Heart right ventricle (tissue), 16 donors: ENCODE measurements at regions of chr17 and their contacts with region 1.

Region 1: DNA sequence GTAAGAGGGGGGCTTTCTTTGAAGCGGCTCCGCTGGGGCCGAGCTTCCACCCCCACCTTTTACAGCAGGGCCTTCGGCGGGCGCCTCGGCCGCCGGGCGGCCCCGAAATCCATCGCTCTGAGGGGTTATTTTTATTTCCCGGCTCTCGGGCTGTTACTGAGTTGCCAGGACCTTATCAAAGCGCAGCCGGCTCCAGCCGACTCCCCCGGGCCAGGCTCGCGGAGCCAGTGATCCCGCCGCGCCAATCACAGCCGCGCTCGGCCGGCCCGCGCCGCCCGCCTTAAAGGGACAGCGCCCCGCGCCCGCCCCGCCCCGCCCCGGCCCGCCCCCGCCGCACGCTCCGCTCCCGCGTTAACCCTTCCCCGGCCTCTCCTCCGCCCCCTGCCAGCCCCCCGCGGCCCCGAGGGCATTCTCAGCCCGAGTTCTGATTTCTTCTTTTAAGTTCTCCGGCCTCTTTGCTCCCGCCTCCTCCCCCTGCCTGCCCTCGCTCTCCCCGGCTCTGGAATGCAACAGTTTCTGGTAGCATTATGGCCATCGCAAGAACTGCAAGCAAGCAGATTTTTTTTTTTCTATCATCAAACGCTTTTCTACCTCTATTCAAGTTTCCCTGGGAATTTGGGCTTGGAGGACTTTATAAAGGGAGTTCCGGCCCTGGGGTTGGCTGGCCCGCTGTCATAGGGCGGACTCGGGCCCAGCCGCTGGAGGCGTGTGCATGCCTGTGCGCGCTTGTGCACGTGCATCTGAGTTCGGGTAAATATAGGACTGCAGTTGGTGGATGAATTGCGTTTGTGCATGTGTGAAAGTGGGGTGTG is at the start of gene AXIN2:
- DNase-seq: peak; percentile 91 to 92
- ATAC-seq: peak; percentile 83 to 93 (median 88)
- H3K4me3 ChIP-seq: peak within 1 kb of the TSS; percentile 82 to 97 (median 90)
- H3K27ac ChIP-seq: peak within 1 kb of the TSS; percentile 88 to 95 (median 91)
- H3K4me1 ChIP-seq: peaks cover 4 to 34% (median 21%) of the 10 kb centered on the region in 9 donors
- H3K27me3 ChIP-seq: peaks cover 0 to 48% (median 0%) of the 10 kb centered on the region in 7 donors
- CTCF ChIP-seq: peak in 5 of 9 donors; percentile 9 to 31 (median 16)
- total RNA-seq, gene AXIN2: 5.7 to 19.2 (median 13.7) TPM

Region 2: DNA sequence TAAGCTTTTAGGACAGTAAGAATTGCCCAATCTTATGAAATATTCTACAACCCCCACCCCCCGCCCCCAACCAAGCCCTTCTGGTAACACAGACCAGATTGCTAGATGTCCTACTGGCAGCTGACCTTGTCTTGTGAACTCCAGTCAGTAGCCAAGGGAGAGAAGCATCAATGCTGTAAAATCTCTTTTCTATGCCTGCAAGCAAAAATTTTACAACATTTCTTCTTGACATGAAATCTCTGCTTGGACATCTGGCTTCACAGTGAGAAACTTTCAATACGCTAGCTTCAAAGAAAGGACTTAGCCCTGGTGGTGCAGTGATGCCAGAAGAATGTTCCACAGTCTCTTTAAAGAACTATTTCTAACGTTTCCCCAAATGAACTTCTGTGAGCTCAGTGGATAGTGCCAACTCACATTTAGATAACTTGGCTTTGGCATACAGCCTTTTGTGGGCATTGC is 169.1 kb after region 1 on chr17:
- intact Hi-C with region 1: loop called in 1 of 10 experiments (anchors 10 kb)
- DNase-seq: no peak
- ATAC-seq: peak in 5 of 8 donors; percentile 29 to 64 (median 63)
- H3K4me3 ChIP-seq: no peak overlapping the region
- H3K27ac ChIP-seq: no peak overlapping the region
- H3K4me1 ChIP-seq: peaks cover 0 to 16% (median 6%) of the 10 kb centered on the region in 9 donors
- H3K27me3 ChIP-seq: no peaks in the 10 kb centered on the region
- CTCF ChIP-seq: no peak

Region 3: GRCh38 chr17:65750631-65751117 is 189.1 kb after region 1 on chr17:
- intact Hi-C with region 1: loop called in 1 of 10 experiments (anchors 10 kb)
- DNase-seq: peak; percentile 56 to 71
- ATAC-seq: peak; percentile 76 to 97 (median 84)
- H3K4me3 ChIP-seq: no peak overlapping the region
- H3K27ac ChIP-seq: peak overlapping the region in 1 of 10 donors; percentile 29
- H3K4me1 ChIP-seq: peaks cover 0 to 22% (median 13%) of the 10 kb centered on the region in 9 donors
- H3K27me3 ChIP-seq: no peaks in the 10 kb centered on the region
- CTCF ChIP-seq: no peak

Region 4: DNA sequence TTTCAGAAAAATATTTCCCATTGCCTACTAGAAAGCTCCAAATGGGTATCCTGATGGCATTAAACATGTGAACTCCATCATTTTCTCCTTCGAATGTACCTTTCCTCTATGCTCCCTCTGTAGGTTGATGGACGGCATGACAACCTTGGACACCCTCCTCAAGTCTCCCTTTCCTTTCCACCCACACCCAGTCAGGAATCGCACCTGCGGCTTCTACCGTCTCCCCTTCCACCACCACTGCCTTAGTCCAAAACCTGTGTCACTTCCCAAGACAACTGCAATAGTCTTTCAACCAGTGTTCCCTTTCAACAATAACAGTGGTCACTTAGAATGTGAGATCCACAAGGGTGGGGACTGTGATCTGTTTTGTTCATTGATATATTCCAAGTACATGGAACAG is 233.0 kb after region 1 on chr17:
- intact Hi-C with region 1: loop called in 2 of 10 experiments (anchors 5 to 10 kb)
- DNase-seq: no peak
- ATAC-seq: no peak
- H3K4me3 ChIP-seq: no peak overlapping the region
- H3K27ac ChIP-seq: no peak overlapping the region
- H3K4me1 ChIP-seq: no peaks in the 10 kb centered on the region
- H3K27me3 ChIP-seq: no peaks in the 10 kb centered on the region
- CTCF ChIP-seq: peak in 7 of 9 donors; percentile 18 to 50 (median 40)

Region 5: DNA sequence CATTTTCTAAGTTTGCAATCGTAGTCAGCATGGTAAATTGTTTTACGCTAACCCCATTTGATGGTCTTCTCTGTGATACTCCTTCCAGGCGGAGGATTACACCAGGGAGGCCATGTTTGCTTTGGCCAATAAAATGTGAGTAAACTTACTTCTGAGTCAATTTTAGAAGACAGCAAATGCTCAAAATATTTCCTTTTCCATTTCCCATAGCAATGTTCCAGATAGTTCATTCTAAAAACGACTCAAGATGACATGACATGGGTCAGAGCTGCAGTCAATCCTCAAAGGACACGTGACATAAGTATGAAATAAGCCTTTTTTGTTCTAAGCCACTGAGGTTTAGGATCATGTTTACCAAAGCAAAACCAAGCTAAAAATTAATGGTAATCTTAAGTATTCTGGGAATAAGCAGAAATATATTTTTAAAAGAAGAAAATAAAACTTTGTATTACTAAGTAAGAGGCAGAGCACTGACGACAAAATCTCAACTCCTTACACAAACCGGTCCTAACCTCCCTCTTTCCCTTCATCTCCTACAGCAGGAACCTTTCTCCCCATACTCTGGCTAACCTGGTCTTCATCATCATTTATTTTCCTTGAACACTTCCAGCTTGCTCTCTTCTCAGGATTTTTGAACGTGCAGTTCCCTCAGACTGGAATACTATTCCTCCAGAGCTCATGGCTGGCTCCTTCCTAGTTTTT is 364.2 kb after region 1 on chr17:
- intact Hi-C with region 1: loop called in 1 of 10 experiments (anchors 10 kb)
- DNase-seq: peak in 1 of 2 donors; percentile 28
- ATAC-seq: peak in 7 of 8 donors; percentile 43 to 93 (median 81)
- H3K4me3 ChIP-seq: no peak overlapping the region
- H3K27ac ChIP-seq: peak overlapping the region; percentile 8 to 79 (median 55)
- H3K4me1 ChIP-seq: peaks cover 0 to 1% (median 0%) of the 10 kb centered on the region in 9 donors
- H3K27me3 ChIP-seq: no peaks in the 10 kb centered on the region
- CTCF ChIP-seq: no peak